HCT116 (cell line): ENCODE measurements at regions of chr17 and their contacts with region 1.

Region 1: GRCh38 chr17:43940630-43941029 is 1.6 kb downstream of the PPY start:
- DNase-seq: peak; percentile 24
- ATAC-seq: peak; percentile 67
- H3K4me3 ChIP-seq: no peak overlapping the region
- H3K27ac ChIP-seq: no peak overlapping the region
- H3K4me1 ChIP-seq: peaks cover 0 to 29% of the 10 kb centered on the region in 2 experiments; a peak in 2 of 4 replicates
- H3K27me3 ChIP-seq: no peaks in the 10 kb centered on the region
- CTCF ChIP-seq: peak; percentile 39 to 77 (median 71); a peak in 5 of 6 replicates
- POLR2A ChIP-seq: no peak
- RAD21 ChIP-seq: peak; percentile 53

Region 2: GRCh38 chr17:43909537-43910231 is 30.9 kb before region 1 on chr17:
- CTCF ChIA-PET with region 1: interaction called, 19 read pairs
- POLR2A ChIA-PET with region 1: no interaction called
- RAD21 ChIA-PET with region 1: interaction called in 1 of 2 experiments, 6 read pairs
- intact Hi-C with region 1: no loop called
- DNase-seq: no peak
- ATAC-seq: no peak
- H3K4me3 ChIP-seq: no peak overlapping the region
- H3K27ac ChIP-seq: no peak overlapping the region
- H3K4me1 ChIP-seq: peaks cover 21 to 32% of the 10 kb centered on the region in 2 experiments
- H3K27me3 ChIP-seq: no peaks in the 10 kb centered on the region
- CTCF ChIP-seq: no peak
- POLR2A ChIP-seq: no peak
- RAD21 ChIP-seq: no peak

Region 3: DNA sequence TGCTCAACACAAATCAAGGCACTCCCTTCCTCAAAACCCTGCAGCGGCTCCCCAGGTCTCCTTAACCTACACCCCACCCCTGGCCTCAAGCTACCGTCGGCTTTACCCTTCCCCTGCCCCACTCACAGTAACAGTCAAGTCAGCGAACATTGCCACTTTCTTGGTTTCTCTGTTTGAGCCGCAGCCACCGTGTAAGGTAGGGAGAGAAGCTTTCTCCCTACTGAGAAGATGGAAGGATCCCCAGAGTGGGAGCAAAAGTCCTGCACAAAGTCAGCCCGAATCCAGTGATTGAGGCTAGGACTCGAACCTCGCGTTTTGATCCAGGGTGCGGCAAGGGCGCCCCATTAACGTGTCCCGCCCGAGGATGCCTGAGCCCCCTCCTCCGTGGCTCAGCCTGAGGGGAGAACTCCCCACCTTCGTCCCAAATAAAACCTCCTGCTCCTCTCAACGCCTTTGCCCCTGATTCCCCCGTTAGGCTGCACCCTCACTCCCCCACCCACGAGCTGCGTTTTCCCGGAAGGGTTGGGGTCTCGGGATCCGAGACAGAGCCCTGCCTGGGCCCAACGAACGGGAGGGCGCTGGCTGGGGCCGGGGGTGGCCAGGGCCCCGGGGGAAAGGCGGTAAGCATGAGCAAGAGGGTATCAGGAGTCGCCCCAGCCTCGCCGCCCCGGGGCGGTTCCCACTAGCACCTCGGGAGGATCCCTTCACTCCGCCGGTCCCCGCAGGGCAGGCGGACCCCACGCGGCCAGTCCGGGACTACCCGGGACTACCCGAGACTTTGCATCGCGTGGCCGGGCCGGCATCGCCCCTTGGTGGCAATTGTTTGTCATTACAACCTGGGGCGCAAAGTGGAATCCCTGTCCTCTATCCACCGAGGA is 53.9 kb after region 1 on chr17:
- CTCF ChIA-PET with region 1: interaction called, 21 read pairs
- POLR2A ChIA-PET with region 1: no interaction called
- RAD21 ChIA-PET with region 1: interaction called, 6 to 9 read pairs
- intact Hi-C with region 1: loop called (anchors 1 kb)
- DNase-seq: no peak
- ATAC-seq: peak; percentile 93
- H3K4me3 ChIP-seq: no peak overlapping the region
- H3K27ac ChIP-seq: no peak overlapping the region
- H3K4me1 ChIP-seq: peaks cover 0 to 16% of the 10 kb centered on the region in 2 experiments; a peak in 2 of 4 replicates
- H3K27me3 ChIP-seq: no peaks in the 10 kb centered on the region
- CTCF ChIP-seq: peak; percentile 79 to 95 (median 85)
- POLR2A ChIP-seq: no peak
- RAD21 ChIP-seq: peak; percentile 94

Region 4: GRCh38 chr17:44004761-44005526 is 64.3 kb after region 1 on chr17:
- CTCF ChIA-PET with region 1: interaction called, 19 read pairs
- POLR2A ChIA-PET with region 1: interaction called, 3 read pairs
- RAD21 ChIA-PET with region 1: no interaction called
- intact Hi-C with region 1: no loop called
- DNase-seq: no peak
- ATAC-seq: peak; percentile 23
- H3K4me3 ChIP-seq: peak overlapping the region; percentile 87 to 92
- H3K27ac ChIP-seq: peak overlapping the region; percentile 83
- H3K4me1 ChIP-seq: peaks cover 29 to 70% of the 10 kb centered on the region in 2 experiments
- H3K27me3 ChIP-seq: no peaks in the 10 kb centered on the region
- CTCF ChIP-seq: no peak
- POLR2A ChIP-seq: no peak
- RAD21 ChIP-seq: no peak

Region 5: GRCh38 chr17:44044067-44044466 is 103.4 kb after region 1 on chr17:
- CTCF ChIA-PET with region 1: interaction called, 40 read pairs
- POLR2A ChIA-PET with region 1: no interaction called
- RAD21 ChIA-PET with region 1: interaction called, 3 to 6 read pairs
- intact Hi-C with region 1: loop called (anchors 1 kb)
- DNase-seq: no peak
- ATAC-seq: no peak
- H3K4me3 ChIP-seq: no peak overlapping the region
- H3K27ac ChIP-seq: no peak overlapping the region
- H3K4me1 ChIP-seq: no peaks in the 10 kb centered on the region
- H3K27me3 ChIP-seq: no peaks in the 10 kb centered on the region
- CTCF ChIP-seq: no peak
- POLR2A ChIP-seq: no peak
- RAD21 ChIP-seq: no peak

Region 6: DNA sequence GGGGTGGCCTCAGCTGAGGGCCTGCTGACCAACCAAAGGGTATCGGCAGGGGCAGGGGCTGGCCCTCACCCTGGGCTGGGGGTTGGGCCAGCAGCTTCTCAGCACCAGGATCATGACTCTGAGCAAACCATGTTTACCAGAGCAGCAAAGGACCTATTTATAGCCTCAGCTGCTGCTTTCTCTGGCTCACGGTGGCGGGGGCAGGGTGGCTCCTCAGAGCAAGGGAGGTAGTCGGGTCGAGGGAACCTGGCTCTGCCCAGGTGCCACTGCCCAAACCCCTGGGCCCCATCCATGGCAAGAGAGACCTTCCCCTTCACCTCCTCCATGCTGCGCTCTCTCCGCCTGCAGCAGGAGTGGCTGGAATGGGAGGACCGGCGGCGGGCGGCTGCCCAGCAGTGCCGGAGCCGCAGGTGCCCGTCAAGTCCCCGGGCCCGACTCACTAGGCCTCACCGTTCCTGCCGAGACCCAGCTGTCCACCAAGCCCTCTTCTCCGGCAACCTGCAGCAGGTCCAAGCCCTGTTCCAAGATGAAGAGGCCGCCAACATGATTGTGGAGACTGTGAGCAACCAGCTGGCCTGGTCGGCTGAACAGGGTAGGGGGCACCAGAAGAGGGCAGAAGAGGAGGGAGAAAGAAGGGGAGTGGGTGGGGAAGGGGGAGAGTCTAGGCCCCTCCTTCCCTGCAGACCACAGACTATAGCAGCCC is 230.0 kb after region 1 on chr17 and contains the start of gene ASB16:
- CTCF ChIA-PET with region 1: interaction called, 30 read pairs
- POLR2A ChIA-PET with region 1: no interaction called
- RAD21 ChIA-PET with region 1: interaction called in 1 of 2 experiments, 7 read pairs
- intact Hi-C with region 1: no loop called
- DNase-seq: no peak
- ATAC-seq: no peak
- H3K4me3 ChIP-seq: no peak within 1 kb of the TSS
- H3K27ac ChIP-seq: no peak within 1 kb of the TSS; the same call in 1 of the 2 replicates
- H3K4me1 ChIP-seq: peaks cover 0 to 13% of the 10 kb centered on the region in 2 experiments; a peak in 2 of 4 replicates
- H3K27me3 ChIP-seq: no peaks in the 10 kb centered on the region
- CTCF ChIP-seq: no peak
- POLR2A ChIP-seq: no peak
- RAD21 ChIP-seq: no peak
- total RNA-seq, gene ASB16: 0.37 TPM